ENCODE measurements at regions of chr6 and their contacts with region 1.

Region 1: DNA sequence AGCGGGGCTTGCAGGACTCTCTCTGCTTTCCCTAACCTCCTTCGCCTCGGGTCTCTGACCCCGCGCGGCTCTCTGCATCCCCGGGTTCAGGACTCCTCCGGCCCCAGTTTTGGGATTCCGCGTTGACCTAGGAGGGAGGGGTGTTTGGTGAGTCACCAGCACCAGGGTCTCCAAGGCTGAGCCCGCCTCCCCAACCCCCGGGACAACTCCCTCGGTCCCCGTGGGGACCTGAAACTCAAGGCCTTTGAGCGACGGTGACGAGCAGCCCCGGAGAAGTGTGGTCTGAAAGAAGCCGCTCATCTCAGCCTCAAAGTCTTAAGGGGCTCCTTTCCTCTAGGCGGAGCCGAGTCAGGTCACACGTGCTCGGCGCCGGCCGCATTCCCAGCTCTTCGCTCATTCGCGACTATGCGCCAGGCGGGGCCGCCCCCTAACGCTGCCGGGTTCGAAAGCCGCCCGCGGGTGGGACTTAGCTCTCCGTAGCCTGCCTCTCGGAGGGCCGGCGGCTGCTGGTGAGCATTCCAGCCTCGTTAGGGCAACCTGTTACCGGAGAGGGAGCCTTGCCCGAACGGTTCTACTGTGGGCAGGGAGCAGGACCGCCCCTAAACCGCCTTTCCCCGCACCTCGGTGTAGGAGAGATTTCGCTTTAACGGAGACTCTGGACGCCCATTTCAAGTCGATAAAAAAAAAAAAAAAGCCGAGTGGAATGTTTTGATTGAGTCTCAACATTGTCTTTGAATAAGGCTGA is 3.0 kb upstream of the PRDM13 start:
- DNase-seq: peak in 1 of 2 donors; percentile 80
- ATAC-seq: no peak
- H3K4me3 ChIP-seq: no peak overlapping the region
- H3K27ac ChIP-seq: no peak overlapping the region
- H3K4me1 ChIP-seq: no peaks in the 10 kb centered on the region
- H3K27me3 ChIP-seq: no peaks in the 10 kb centered on the region

Region 2: GRCh38 chr6:99879431-99879830 is 275.8 kb after region 1 on chr6:
- intact Hi-C with region 1: no loop called
- DNase-seq: no peak
- ATAC-seq: no peak
- H3K4me3 ChIP-seq: no peak overlapping the region
- H3K27ac ChIP-seq: no peak overlapping the region
- H3K4me1 ChIP-seq: no peaks in the 10 kb centered on the region
- H3K27me3 ChIP-seq: no peaks in the 10 kb centered on the region

Region 3: GRCh38 chr6:100455230-100456124 is 851.9 kb after region 1 on chr6:
- intact Hi-C with region 1: loop called in 1 of 2 experiments (anchors 10 kb)
- DNase-seq: peak in 1 of 2 donors; percentile 63
- ATAC-seq: no peak
- H3K4me3 ChIP-seq: no peak overlapping the region
- H3K27ac ChIP-seq: no peak overlapping the region
- H3K4me1 ChIP-seq: no peaks in the 10 kb centered on the region
- H3K27me3 ChIP-seq: peaks cover 0 to 4% of the 10 kb centered on the region in 2 donors

Measured in aorta (tissue), 5 donors.